Heart left ventricle (tissue), 16 donors: ENCODE measurements at regions of chr20 and their contacts with region 1.

Region 1: DNA sequence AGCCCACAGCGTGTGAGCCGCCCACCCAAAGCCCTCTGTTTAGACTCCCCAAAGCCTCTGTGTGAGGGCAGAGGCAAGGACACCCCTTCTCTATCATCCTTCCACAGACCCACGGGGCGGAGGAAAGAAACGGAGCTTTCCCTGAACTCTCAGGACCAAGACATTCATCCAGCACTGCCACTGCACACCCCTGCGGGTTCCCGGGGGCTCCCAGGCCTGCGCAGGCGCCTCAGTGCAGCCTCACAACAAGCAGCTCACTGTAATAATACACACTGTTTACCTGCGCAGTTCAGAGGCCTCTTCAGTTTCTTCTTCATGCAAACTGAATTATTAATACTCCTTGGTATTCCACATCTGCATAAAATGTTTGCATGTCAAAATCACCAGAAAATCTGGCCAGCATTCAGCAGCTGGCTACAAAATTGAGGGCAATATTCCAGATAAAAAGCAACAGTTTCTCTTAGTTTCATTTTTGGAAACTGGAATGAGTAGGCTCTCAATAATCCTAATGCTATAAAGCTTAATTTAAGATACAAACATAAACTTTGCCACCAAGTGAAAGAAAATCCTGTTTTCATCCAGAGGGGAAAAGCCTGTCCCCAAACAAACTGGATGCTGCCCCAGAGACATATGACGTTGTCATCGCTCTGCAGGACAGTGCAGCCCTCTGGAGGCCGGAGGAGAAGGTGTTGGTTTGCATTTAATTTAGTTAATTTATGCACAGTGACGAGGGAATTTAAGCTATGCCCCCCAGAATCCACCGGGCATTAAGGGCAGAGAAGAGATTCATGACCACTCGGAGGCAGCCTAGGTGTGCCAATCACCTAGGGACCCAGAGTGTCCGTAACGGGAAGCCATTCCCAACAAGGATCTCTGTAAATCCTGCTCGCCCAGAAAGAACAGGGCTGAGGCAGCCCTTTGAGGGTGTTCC is 45.3 kb downstream of the NINL start:
- DNase-seq: peak in 1 of 5 donors; percentile 50
- ATAC-seq: peak; percentile 50 to 79 (median 70)
- H3K4me3 ChIP-seq: peak overlapping the region in 11 of 12 donors; percentile 7 to 61 (median 46)
- H3K27ac ChIP-seq: peak overlapping the region in 11 of 12 donors; percentile 19 to 75 (median 62)
- H3K4me1 ChIP-seq: peaks cover 0 to 26% (median 13%) of the 10 kb centered on the region in 12 donors
- H3K27me3 ChIP-seq: no peaks in the 10 kb centered on the region
- CTCF ChIP-seq: peak in 7 of 12 donors; percentile 25 to 47 (median 37)
- POLR2A ChIP-seq: no peak

Region 2: DNA sequence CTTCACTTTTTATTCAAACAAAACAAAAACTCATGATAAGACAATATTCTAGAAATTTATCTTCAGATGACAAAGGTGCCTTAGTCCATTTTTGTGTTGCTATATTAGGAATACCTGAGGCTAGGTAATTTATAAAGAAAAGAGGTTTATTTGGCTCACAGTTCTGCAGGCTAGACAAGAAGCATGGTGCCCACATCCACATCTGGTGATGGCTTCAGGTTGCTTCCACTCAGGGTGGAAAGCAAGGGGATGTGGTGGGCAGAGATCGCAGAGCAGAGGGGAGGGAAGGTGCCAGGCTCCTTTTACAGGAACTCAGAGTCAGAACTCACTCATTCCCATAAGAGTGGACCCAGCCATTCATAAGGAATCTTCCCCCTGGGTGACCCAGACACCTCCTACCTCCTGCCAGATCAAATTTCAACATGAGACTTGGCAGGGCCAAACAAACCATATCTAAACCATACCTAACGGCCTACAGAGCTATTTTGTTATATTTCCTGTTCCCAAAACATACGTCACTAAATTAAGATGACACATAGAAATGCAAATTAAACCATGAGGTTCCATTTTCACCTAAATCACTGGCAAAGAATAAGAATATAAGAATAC is 175.7 kb before region 1 on chr20:
- intact Hi-C with region 1: no loop called
- DNase-seq: no peak
- ATAC-seq: no peak
- H3K4me3 ChIP-seq: no peak overlapping the region
- H3K27ac ChIP-seq: no peak overlapping the region
- H3K4me1 ChIP-seq: peaks cover 0 to 8% (median 0%) of the 10 kb centered on the region in 12 donors
- H3K27me3 ChIP-seq: no peaks in the 10 kb centered on the region
- CTCF ChIP-seq: no peak
- POLR2A ChIP-seq: no peak

Region 3: GRCh38 chr20:25461771-25462545 is 78.0 kb before region 1 on chr20:
- intact Hi-C with region 1: loop called in 1 of 10 experiments (anchors 10 kb)
- DNase-seq: peak in 2 of 5 donors; percentile 28 to 59
- ATAC-seq: peak in 2 of 4 donors; percentile 17 to 35
- H3K4me3 ChIP-seq: no peak overlapping the region
- H3K27ac ChIP-seq: peak overlapping the region in 2 of 12 donors; percentile 32 to 52
- H3K4me1 ChIP-seq: peaks cover 0 to 10% (median 0%) of the 10 kb centered on the region in 12 donors
- H3K27me3 ChIP-seq: no peaks in the 10 kb centered on the region
- CTCF ChIP-seq: no peak
- POLR2A ChIP-seq: no peak

Region 4: GRCh38 chr20:25486377-25486776 is 53.6 kb before region 1 on chr20:
- intact Hi-C with region 1: loop called in 1 of 10 experiments (anchors 10 kb)
- DNase-seq: peak in 4 of 5 donors; percentile 32 to 60 (median 42)
- ATAC-seq: peak; percentile 51 to 80 (median 66)
- H3K4me3 ChIP-seq: no peak overlapping the region
- H3K27ac ChIP-seq: no peak overlapping the region
- H3K4me1 ChIP-seq: peaks cover 0 to 13% (median 4%) of the 10 kb centered on the region in 12 donors
- H3K27me3 ChIP-seq: no peaks in the 10 kb centered on the region
- CTCF ChIP-seq: no peak
- POLR2A ChIP-seq: no peak

Region 5: GRCh38 chr20:25600632-25601031 is 60.6 kb after region 1 on chr20:
- intact Hi-C with region 1: loop called in 1 of 10 experiments (anchors 10 kb)
- DNase-seq: no peak
- ATAC-seq: no peak
- H3K4me3 ChIP-seq: no peak overlapping the region
- H3K27ac ChIP-seq: no peak overlapping the region
- H3K4me1 ChIP-seq: no peaks in the 10 kb centered on the region
- H3K27me3 ChIP-seq: no peaks in the 10 kb centered on the region
- CTCF ChIP-seq: no peak
- POLR2A ChIP-seq: no peak

Region 6: DNA sequence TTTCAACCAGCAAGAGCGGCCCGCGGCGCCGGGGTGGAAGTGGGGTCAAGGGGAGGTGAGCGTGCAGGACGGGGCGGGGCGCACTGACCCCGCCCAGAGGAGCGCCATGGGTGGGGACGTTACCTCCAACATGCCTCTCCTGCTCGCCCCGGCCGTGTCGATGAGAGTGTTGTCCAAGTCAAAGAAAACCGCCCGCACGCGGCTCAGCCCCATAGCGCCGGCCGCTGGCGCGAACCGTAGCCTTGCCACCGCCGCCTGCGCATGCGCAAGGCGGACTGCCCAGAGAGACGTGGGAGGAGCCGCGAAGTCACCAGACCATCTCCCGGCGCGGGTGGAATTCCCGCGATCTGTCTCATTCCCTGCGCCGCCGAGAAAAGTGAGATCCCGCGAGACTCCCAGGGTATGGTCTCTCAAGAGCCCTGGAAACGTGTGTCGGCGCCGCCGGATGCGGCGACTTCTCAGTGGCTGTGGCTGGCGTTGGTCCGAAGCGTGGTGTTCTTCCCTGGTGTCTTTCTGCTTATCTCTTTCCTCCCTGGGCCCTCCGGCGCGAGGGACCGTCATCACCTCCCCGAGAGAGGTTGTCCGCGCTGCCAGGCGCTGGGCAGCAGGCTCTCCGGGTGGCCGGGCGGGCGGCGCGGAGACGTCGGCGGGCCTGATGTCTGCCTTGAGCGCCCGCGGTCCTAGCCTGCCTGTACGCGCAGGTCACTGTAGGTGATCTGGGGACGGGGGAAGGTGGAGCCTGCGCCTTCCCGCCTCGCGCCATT is 83.9 kb after region 1 on chr20 and contains the start of gene NANP:
- intact Hi-C with region 1: loop called in 1 of 10 experiments (anchors 10 kb)
- DNase-seq: peak; percentile 95 to 98 (median 97)
- ATAC-seq: peak; percentile 94 to 97 (median 96)
- H3K4me3 ChIP-seq: peak within 1 kb of the TSS; percentile 72 to 99 (median 84)
- H3K27ac ChIP-seq: peak within 1 kb of the TSS; percentile 53 to 97 (median 87)
- H3K4me1 ChIP-seq: peaks cover 0 to 23% (median 15%) of the 10 kb centered on the region in 12 donors
- H3K27me3 ChIP-seq: no peaks in the 10 kb centered on the region
- CTCF ChIP-seq: peak in 2 of 12 donors; percentile 4 to 9
- POLR2A ChIP-seq: peak in 1 of 2 donors; percentile 71
- total RNA-seq, gene NANP: 2.5 to 4.4 (median 3.1) TPM

Region 7: DNA sequence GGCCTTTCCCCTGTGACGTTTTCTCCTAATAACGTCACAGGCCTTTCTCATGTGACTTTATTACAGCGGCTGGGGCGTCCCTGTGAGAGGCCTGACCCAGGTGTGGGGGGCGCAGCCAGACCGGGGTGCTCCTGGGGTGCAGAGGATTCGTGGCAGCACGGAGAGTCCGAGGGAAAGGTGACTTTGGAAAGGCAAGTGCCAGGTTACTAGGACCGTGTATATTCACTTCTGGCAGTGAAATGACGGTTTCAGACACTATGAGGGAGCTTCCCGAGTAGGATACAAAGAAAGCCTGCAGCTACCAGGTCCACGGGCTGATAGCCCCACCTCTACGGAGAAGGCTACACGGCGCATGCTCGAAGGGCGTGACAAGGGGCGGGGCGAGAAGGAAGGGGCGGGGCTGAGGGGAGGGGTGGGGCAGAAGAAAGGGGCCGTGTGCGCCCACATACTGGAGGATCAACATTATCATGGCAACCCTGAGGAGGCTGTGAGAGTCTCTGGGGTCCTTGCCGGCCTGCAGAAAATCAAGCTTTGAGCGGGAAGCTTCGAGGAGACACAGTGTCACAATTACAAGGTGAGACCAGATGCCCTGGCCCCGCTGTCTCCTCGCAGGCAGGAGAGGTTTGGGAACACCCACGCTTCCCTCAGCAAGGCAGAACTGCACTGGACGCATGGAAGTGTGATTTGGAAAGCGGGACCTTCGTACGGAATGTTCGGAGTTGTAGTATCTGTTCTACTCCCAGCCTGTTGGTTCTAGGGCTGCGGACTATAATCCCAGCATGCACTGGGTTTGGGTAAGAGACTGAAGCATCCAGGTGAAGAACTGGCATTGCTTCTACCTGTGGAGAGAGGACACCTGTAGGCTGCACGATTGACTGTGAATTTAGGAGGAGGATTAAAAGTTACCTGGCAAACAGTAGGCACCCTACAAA is 211.0 kb after region 1 on chr20:
- intact Hi-C with region 1: loop called in 1 of 10 experiments (anchors 5 kb)
- DNase-seq: peak in 4 of 5 donors; percentile 33 to 83 (median 52)
- ATAC-seq: peak; percentile 67 to 97 (median 94)
- H3K4me3 ChIP-seq: peak overlapping the region in 11 of 12 donors; percentile 16 to 68 (median 52)
- H3K27ac ChIP-seq: peak overlapping the region in 3 of 12 donors; percentile 11 to 51 (median 50)
- H3K4me1 ChIP-seq: peaks cover 0 to 9% (median 0%) of the 10 kb centered on the region in 12 donors
- H3K27me3 ChIP-seq: no peaks in the 10 kb centered on the region
- CTCF ChIP-seq: no peak
- POLR2A ChIP-seq: peak in 1 of 2 donors; percentile 21